ENCODE measurements at regions of chr17 and their contacts with region 1.

Region 1: GRCh38 chr17:42200702-42201101 is 6.4 kb upstream of the GHDC start:
- DNase-seq: no peak
- H3K4me3 ChIP-seq: no peak overlapping the region
- H3K27ac ChIP-seq: no peak overlapping the region
- H3K4me1 ChIP-seq: no peaks in the 10 kb centered on the region
- H3K27me3 ChIP-seq: no peaks in the 10 kb centered on the region
- CTCF ChIP-seq: no peak
- EP300 ChIP-seq: no peak
- POLR2A ChIP-seq: no peak
- RAD21 ChIP-seq: no peak

Region 2: GRCh38 chr17:42212382-42212781 is 11.7 kb after region 1 on chr17:
- CTCF ChIA-PET with region 1: interaction called, 11 read pairs
- POLR2A ChIA-PET with region 1: interaction called, 3 read pairs
- DNase-seq: no peak
- H3K4me3 ChIP-seq: no peak overlapping the region
- H3K27ac ChIP-seq: no peak overlapping the region
- H3K4me1 ChIP-seq: no peaks in the 10 kb centered on the region
- H3K27me3 ChIP-seq: no peaks in the 10 kb centered on the region
- CTCF ChIP-seq: no peak
- EP300 ChIP-seq: no peak
- POLR2A ChIP-seq: no peak
- RAD21 ChIP-seq: no peak

Measured in H1 (cell line).